ENCODE measurements at regions of chr11 and their contacts with region 1.

Region 1: GRCh38 chr11:58675334-58676155 is 53.1 kb downstream of the CNTF start:
- DNase-seq: peak; percentile 59
- ATAC-seq: peak; percentile 100
- H3K4me3 ChIP-seq: no peak overlapping the region
- H3K27ac ChIP-seq: no peak overlapping the region
- H3K4me1 ChIP-seq: no peaks in the 10 kb centered on the region
- H3K27me3 ChIP-seq: peaks cover 4% of the 10 kb centered on the region
- CTCF ChIP-seq: peak; percentile 91
- POLR2A ChIP-seq: no peak
- RAD21 ChIP-seq: peak; percentile 81

Region 2: GRCh38 chr11:58573451-58574104 is 102.0 kb before region 1 on chr11:
- CTCF ChIA-PET with region 1: interaction called, 6 read pairs
- POLR2A ChIA-PET with region 1: no interaction called
- dilution Hi-C with region 1: no loop called
- in situ Hi-C with region 1: loop called (anchors 5 kb)
- intact Hi-C with region 1: loop called (anchors 1 kb)
- DNase-seq: peak; percentile 85
- ATAC-seq: peak; percentile 18
- H3K4me3 ChIP-seq: no peak overlapping the region
- H3K27ac ChIP-seq: peak overlapping the region; percentile 82
- H3K4me1 ChIP-seq: peaks cover 15% of the 10 kb centered on the region
- H3K27me3 ChIP-seq: no peaks in the 10 kb centered on the region
- CTCF ChIP-seq: no peak
- POLR2A ChIP-seq: no peak
- RAD21 ChIP-seq: no peak

Region 3: GRCh38 chr11:58788355-58789023 is 112.9 kb after region 1 on chr11:
- CTCF ChIA-PET with region 1: no interaction called
- POLR2A ChIA-PET with region 1: no interaction called
- dilution Hi-C with region 1: no loop called
- in situ Hi-C with region 1: no loop called
- intact Hi-C with region 1: loop called (anchors 5 kb)
- DNase-seq: peak; percentile 61
- ATAC-seq: peak; percentile 98
- H3K4me3 ChIP-seq: no peak overlapping the region
- H3K27ac ChIP-seq: no peak overlapping the region
- H3K4me1 ChIP-seq: no peaks in the 10 kb centered on the region
- H3K27me3 ChIP-seq: no peaks in the 10 kb centered on the region; the same call in 1 of the 2 replicates
- CTCF ChIP-seq: peak; percentile 68
- POLR2A ChIP-seq: no peak
- RAD21 ChIP-seq: peak; percentile 62